ENCODE measurements at regions of chr7 and their contacts with region 1.

Region 1: GRCh38 chr7:77393269-77393668 is 22.9 kb downstream of the GSAP start:
- DNase-seq: peak; percentile 76
- H3K4me3 Mint-ChIP-seq: peak overlapping the region; percentile 1
- H3K27ac Mint-ChIP-seq: peak overlapping the region; percentile 30
- H3K4me1 Mint-ChIP-seq: peaks cover 26% of the 10 kb centered on the region
- H3K27me3 Mint-ChIP-seq: no peaks in the 10 kb centered on the region

Region 2: DNA sequence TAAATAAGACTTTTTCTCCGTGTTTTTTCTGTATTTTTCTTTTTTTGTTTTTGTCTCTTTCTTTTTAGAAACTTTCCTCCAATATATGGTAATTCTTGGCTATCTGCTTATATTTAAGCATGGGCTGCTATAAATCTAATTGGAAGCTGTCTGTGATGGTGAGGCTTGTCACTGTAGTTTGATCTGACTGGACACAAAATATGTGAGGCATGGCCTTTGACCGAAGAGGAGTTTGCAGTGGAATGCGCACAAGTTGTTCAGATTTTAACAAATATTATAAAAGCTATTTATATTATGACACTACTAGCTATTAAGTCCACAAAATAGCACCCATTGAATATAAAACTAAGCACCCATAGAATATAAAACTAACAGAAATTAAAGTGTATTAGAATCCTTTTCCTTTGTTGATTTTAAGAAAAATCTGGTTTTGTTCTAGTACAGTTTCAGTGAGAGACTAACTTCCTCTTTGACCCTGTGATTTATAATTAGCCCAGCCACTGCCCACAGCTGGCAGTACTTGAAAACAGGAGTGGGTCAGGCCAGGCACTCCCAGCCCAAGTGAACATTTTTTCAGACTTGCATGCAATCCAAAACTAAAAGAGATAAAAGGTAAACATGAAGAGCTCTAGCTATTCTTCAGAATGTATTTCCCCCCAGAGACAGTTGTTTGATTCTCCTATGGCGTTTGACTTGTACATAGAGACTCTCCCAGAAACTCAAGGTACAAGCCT is 123.7 kb before region 1 on chr7:
- CTCF ChIA-PET with region 1: no interaction called
- POLR2A ChIA-PET with region 1: no interaction called
- intact Hi-C with region 1: loop called (anchors 1 kb)
- DNase-seq: no peak
- H3K4me3 Mint-ChIP-seq: no peak overlapping the region
- H3K27ac Mint-ChIP-seq: no peak overlapping the region
- H3K4me1 Mint-ChIP-seq: peaks cover 12% of the 10 kb centered on the region
- H3K27me3 Mint-ChIP-seq: peaks cover 4% of the 10 kb centered on the region

Region 3: DNA sequence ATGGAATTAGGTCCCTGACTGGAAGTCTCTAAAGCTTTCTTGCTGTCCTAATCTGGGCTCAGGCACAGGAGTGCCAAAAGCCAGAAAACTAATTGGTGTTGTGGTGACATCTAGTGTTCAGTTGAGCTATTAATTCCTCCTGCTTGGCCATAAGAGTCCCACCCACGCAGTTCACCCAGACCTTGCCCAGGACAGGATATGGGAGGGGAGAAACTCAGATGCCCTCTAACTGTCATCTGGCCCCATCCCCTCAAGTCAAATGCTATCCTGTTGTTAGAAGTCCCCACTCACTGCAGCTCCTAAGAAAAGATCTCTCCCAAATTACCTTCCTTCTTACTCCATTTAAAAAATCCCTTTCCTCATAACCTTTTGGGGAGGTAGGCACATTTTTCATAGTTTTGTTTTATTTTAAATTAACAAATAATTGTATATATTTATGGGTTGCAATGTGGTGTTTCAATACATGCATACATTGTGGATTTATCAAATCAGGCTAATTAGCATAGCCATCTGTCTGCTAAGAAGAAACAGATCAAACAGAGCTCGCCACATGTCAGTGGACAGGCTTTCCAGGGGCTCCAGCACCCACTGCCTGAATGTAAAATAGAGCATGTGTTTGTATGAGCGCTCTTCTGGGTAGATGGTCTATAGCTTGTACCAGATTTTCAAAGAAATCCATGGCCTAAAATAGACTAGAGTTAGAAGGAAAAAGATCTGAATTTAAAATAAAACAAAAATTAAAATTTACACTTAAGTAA is 61.2 kb before region 1 on chr7:
- CTCF ChIA-PET with region 1: no interaction called
- POLR2A ChIA-PET with region 1: no interaction called
- intact Hi-C with region 1: loop called (anchors 2 kb)
- DNase-seq: peak; percentile 69
- H3K4me3 Mint-ChIP-seq: no peak overlapping the region
- H3K27ac Mint-ChIP-seq: no peak overlapping the region
- H3K4me1 Mint-ChIP-seq: peaks cover 45% of the 10 kb centered on the region
- H3K27me3 Mint-ChIP-seq: no peaks in the 10 kb centered on the region

Region 4: DNA sequence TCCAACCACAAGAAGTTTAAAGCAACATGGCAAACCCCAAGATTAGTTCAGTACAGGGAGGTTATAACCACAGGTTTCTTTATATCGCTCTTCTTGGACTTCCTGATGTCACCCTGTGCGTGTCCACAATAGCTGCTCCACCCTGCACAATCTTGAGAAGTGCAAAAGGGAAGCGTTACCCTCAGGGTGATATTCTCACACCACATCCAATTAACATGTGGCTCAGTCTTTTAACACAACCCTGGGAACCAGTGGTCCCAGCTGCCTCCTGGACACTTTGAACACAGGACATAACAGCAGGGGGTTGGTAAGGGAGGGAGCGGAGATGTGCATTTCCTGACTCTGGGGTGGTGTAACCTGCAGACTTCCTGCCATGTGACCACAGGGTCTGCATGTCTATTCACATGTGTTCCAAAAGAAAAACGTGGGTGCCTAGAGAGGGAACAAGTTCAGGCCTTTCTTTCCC is 41.7 kb before region 1 on chr7:
- CTCF ChIA-PET with region 1: no interaction called
- POLR2A ChIA-PET with region 1: no interaction called
- intact Hi-C with region 1: loop called (anchors 1 kb)
- DNase-seq: peak; percentile 57
- H3K4me3 Mint-ChIP-seq: peak overlapping the region; percentile 53
- H3K27ac Mint-ChIP-seq: peak overlapping the region; percentile 71
- H3K4me1 Mint-ChIP-seq: peaks cover 49% of the 10 kb centered on the region
- H3K27me3 Mint-ChIP-seq: no peaks in the 10 kb centered on the region

Region 5: DNA sequence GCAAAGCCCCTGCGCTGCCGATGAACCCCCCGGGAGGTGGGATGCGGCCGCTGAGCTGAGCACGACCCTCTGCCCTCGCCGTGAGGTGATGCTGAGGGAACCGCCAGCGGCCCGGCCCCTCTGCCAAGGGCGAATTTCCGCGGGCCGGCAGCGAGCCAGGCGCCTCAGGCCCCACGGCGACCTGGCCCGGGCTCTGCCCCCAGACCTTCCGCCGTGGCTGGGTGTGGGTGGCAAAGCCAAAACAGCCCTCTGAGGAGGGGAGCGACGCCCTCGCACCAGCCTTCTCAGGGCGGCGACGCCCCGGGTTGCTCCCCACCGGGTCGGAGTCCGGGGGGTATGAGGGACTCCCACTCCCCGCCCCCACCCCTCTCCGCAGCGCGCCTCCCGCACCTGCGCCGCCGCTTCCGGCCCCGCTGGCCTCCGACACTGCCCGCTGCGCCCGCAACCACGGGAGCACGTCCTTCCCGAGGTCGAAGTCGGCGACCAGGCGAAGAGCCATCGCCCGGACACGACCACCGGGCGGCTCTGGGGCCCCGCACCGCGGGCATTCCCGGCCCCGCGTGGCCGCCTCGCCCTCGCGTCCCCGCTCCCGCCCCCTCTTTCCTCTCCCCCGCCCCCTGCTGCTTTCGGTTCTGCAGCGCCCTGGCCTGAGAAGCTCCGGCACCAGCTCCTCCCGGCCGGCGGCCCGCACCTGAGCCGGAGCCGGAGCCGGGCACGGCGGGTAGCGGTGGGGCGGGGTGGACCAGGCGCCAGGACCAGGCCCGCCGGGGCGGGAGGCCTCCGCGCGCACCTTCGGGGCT is 22.8 kb after region 1 on chr7 and contains the start of gene GSAP:
- CTCF ChIA-PET with region 1: interaction called, 4 read pairs
- POLR2A ChIA-PET with region 1: no interaction called
- intact Hi-C with region 1: loop called (anchors 1 kb)
- DNase-seq: peak; percentile 61
- H3K4me3 Mint-ChIP-seq: peak within 1 kb of the TSS; percentile 59
- H3K27ac Mint-ChIP-seq: no peak within 1 kb of the TSS
- H3K4me1 Mint-ChIP-seq: peaks cover 32% of the 10 kb centered on the region
- H3K27me3 Mint-ChIP-seq: peaks cover 3% of the 10 kb centered on the region
- total RNA-seq, gene GSAP: 1.7 to 1.9 TPM

Region 6: DNA sequence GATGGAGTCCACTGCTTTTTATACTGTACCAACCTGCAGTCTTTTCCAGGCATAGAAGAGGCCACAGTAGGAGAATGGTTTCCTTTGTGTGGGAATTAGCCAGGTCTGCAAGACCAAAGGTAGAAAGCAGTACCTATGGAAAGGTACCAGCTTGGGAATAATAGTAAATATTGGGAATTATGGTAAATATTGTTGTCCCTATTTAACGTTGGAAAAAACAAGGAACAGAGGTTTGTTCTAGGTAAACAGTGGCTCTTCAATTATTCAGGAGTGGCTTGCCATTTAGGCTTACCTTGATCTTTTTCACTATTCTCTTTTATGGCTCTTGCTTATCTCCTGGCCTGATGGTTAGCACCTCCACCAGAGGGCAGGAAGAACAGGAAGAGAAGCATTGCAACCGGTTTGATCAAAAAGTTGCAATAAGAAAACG is 66.8 kb after region 1 on chr7:
- CTCF ChIA-PET with region 1: no interaction called
- POLR2A ChIA-PET with region 1: no interaction called
- intact Hi-C with region 1: loop called (anchors 1 kb)
- DNase-seq: no peak
- H3K4me3 Mint-ChIP-seq: no peak overlapping the region
- H3K27ac Mint-ChIP-seq: no peak overlapping the region
- H3K4me1 Mint-ChIP-seq: peaks cover 14% of the 10 kb centered on the region
- H3K27me3 Mint-ChIP-seq: no peaks in the 10 kb centered on the region

Region 7: GRCh38 chr7:77536413-77537135 is 143.3 kb after region 1 on chr7:
- CTCF ChIA-PET with region 1: interaction called, 3 read pairs
- POLR2A ChIA-PET with region 1: no interaction called
- intact Hi-C with region 1: loop called (anchors 1 kb)
- DNase-seq: peak; percentile 99
- H3K4me3 Mint-ChIP-seq: peak overlapping the region; percentile 97
- H3K27ac Mint-ChIP-seq: peak overlapping the region; percentile 87
- H3K4me1 Mint-ChIP-seq: peaks cover 13% of the 10 kb centered on the region
- H3K27me3 Mint-ChIP-seq: no peaks in the 10 kb centered on the region

Measured in activated CD4-positive, alpha-beta memory T cell treated with anti-CD3 and anti-CD28 coated beads for 36 hours (primary cell).